ENCODE measurements at regions of chr1 and their contacts with region 1.

Region 1: DNA sequence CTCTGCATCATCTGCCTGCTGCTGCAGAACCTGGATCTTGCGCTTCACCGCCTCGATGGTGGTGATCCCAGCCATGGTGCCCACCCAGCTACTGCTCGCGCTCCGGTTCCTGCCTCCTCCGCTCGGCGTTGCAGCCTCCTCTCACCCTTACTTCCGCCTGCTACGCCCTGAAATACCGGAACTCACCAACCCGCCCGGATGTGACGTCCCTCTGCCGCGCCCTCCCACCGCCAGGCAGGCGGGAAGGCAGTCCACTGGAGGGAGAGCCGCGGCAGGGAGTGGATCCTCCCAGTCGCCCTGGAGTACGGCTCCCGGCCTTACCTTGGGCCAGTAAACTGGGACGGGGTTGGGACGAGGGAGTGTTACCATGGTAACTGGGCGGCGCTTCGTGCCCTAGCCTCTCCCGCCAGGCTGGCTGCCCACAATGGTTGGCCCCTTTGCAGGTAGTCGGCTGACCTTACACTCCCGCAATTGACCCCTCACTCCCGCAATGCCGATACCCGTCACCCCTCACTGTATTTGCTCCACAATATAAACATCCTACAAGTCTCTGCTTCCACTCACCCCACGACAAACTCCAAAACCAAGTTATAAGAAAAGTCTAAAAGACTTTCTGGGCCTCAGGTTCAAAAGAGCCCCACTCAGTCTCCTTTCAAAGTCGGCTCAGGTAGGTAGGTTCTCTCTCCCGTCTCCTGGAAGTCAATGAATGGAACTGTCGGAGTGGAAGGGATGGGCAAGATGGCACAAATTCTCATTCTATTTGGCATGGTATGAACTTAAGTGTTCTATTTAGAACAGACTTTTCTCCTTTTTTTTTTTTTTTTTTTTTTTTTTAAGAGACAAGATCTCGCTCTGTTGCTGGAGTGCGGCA is 8.6 kb downstream of the TPM3 start:
- DNase-seq: peak; percentile 86 to 96 (median 94)
- ATAC-seq: peak; percentile 75
- H3K4me3 ChIP-seq: peak overlapping the region; percentile 79 to 91
- H3K4me3 Mint-ChIP-seq: peak overlapping the region; percentile 100
- H3K27ac ChIP-seq: peak overlapping the region; percentile 95 to 97
- H3K27ac Mint-ChIP-seq: peak overlapping the region; percentile 95
- H3K4me1 ChIP-seq: peaks cover 42% of the 10 kb centered on the region
- H3K4me1 Mint-ChIP-seq: peaks cover 48% of the 10 kb centered on the region
- H3K27me3 ChIP-seq: no peaks in the 10 kb centered on the region
- H3K27me3 Mint-ChIP-seq: no peaks in the 10 kb centered on the region
- CTCF ChIP-seq: no peak

Region 2: DNA sequence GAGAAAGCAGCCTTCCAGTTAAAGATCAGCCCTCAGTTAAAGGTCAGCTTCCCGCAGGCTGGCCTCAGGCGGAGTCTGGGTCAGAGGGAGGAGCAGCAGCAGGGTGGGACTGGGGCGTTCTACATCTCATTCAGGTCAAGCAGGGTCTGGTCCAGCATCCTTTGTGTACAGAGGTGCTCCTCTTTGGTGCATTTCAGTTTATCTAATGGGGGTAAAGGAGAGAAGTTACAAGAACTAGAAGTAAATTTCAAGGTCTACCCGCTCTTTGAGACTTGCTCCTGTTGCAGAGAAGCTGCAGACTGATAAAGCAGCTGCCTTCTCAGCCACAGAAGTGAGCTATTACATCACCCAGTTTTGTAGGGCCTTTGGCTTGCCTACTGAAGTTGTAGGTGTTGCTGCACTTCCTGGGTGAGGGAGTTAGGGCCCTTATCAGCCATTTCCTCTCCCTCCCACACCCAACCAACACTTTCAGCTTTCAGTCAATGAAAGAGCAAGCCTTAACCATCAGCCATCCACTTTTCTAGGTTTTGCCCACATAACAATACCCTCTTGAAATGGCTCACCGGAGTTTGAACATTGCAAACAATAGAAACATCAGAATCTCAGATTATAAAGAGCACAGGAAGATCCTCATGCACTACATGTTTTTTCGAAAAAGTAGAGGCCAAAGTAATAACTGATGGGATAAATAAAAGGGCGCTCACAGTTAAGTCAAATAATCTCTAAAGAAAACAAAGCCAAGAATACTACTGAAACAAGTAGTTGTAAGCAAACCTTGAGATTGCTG is 25.6 kb before region 1 on chr1:
- CTCF ChIA-PET with region 1: interaction called, 5 read pairs
- POLR2A ChIA-PET with region 1: interaction called, 15 read pairs
- intact Hi-C with region 1: loop called (anchors 1 kb)
- DNase-seq: peak; percentile 41 to 93 (median 71)
- ATAC-seq: peak; percentile 98
- H3K4me3 ChIP-seq: peak overlapping the region in 1 of 2 experiments; percentile 16
- H3K4me3 Mint-ChIP-seq: peak overlapping the region; percentile 61
- H3K27ac ChIP-seq: peak overlapping the region; percentile 51 to 61
- H3K27ac Mint-ChIP-seq: peak overlapping the region; percentile 95
- H3K4me1 ChIP-seq: peaks cover 72% of the 10 kb centered on the region
- H3K4me1 Mint-ChIP-seq: peaks cover 78% of the 10 kb centered on the region
- H3K27me3 ChIP-seq: no peaks in the 10 kb centered on the region
- H3K27me3 Mint-ChIP-seq: no peaks in the 10 kb centered on the region
- CTCF ChIP-seq: no peak

Region 3: DNA sequence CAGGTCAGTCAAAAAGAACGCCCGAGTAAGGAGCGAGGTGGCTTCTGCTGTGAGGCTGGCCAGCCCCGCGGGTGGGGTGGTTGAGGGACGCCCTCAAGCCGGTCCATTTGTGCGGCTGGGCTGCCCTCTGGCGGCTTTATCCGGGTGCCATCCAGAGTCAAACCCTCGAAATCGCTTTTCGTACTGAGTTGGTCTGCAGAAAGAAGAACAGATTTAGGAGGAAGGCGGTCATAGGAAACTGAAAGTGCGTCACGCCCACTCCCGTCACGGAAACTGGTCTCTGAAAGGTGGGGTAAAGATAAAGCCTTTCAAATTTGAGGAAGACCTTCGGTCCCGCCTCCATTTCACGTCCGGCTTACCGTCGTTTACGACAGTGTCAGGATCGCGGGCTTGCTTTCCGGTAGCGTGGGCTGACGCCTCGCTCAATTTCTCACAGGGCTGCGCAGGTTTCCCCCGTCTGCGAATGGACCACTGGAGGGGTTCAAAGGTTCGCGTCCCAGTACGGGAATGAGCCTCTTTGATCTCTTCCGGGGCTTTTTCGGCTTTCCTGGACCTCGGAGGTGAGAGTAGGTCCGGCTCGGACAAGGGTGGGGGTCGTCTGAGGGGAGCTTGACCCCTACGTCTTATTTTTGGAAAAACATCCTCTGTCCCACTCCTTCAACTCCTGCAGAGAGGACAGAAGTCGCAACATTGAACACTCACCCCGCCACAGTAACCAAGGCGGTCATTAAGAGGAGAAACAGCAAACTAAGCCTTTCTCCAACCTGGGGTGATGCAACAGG is 89.1 kb after region 1 on chr1 and contains the start of gene HAX1:
- CTCF ChIA-PET with region 1: interaction called, 3 read pairs
- POLR2A ChIA-PET with region 1: no interaction called
- intact Hi-C with region 1: loop called (anchors 1 kb)
- DNase-seq: peak; percentile 91 to 100 (median 94)
- ATAC-seq: peak; percentile 85
- H3K4me3 ChIP-seq: peak within 1 kb of the TSS; percentile 85 to 91
- H3K4me3 Mint-ChIP-seq: peak within 1 kb of the TSS; percentile 94
- H3K27ac ChIP-seq: peak within 1 kb of the TSS; percentile 88 to 92
- H3K27ac Mint-ChIP-seq: peak within 1 kb of the TSS; percentile 98
- H3K4me1 ChIP-seq: peaks cover 22% of the 10 kb centered on the region
- H3K4me1 Mint-ChIP-seq: peaks cover 38% of the 10 kb centered on the region
- H3K27me3 ChIP-seq: no peaks in the 10 kb centered on the region
- H3K27me3 Mint-ChIP-seq: no peaks in the 10 kb centered on the region
- CTCF ChIP-seq: peak; percentile 75
- total RNA-seq, gene HAX1: 56.8 to 58.4 TPM